Brain microvascular endothelial cell (primary cell): ENCODE measurements at regions of chr6 and their contacts with region 1.

Region 1: GRCh38 chr6:1609648-1610496 is at the start of gene FOXC1:
- DNase-seq: peak; percentile 85
- H3K4me3 ChIP-seq: peak within 1 kb of the TSS; percentile 59
- H3K27ac ChIP-seq: peak within 1 kb of the TSS; percentile 55
- H3K27me3 ChIP-seq: peaks cover 43% of the 10 kb centered on the region
- CTCF ChIP-seq: no peak

Region 2: GRCh38 chr6:2103644-2104523 is 494.0 kb after region 1 on chr6:
- in situ Hi-C with region 1: loop called (anchors 25 kb)
- DNase-seq: peak; percentile 25
- H3K4me3 ChIP-seq: no peak overlapping the region
- H3K27ac ChIP-seq: peak overlapping the region; percentile 8
- H3K27me3 ChIP-seq: no peaks in the 10 kb centered on the region
- CTCF ChIP-seq: peak; percentile 42

Region 3: DNA sequence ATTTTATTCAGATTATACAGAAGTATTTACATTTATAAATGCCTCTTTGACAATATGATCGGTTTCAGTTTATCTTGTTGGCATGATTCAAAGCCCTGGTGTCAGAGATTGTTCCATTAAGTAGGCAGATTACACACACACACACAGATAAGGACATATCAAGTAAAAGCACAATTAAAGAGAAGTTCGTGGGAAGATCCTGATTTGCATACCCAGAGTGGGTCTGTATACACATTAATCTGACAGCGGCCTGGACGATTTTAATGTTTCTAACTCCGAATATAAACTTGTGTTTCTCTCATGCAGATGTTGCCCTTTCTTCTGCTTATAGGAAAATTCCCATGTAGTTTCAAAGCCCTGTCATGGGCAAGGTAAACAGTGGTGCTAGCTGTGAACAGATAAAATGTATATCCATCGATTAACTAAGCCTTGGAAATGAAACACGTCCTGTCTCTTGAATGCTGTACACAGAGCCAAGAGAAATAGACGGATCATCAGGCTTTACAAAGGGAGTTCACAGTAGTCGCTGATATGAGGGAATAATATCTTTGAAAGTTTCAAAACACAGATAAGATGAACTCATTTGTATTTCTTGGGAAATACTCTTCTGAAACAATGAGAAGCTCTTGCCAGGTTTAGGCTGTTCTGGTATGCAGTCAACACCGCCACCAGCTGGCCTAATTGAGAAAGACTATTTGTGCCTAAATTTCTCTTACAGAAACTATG is 743.7 kb after region 1 on chr6:
- in situ Hi-C with region 1: loop called (anchors 25 kb)
- DNase-seq: peak; percentile 86
- H3K4me3 ChIP-seq: no peak overlapping the region
- H3K27ac ChIP-seq: peak overlapping the region; percentile 65
- H3K27me3 ChIP-seq: no peaks in the 10 kb centered on the region
- CTCF ChIP-seq: peak; percentile 82